ENCODE measurements at regions of chr20 and their contacts with region 1.

Region 1: DNA sequence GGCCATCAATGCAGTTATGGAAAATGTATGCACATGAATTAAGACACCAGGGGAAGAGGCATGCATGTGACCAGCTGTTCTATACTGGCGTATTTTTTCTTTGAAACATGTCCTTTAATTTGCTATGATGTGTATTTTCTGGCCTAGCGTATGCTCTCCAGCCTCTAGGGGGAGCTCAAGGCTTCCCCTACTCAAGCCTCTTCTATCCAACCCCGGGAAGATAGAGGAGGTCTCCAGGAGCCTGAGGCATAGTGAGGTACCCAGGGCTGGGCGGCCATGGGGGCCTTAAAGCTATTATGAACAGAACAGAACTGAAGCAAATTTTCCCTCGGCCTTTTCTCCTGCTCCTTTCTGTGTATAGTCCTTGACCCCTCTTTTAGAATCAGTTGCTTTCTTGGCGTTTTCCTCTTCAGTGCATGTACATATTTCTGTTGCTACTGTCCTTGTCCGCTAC is 528.9 kb downstream of the MAFB start:
- DNase-seq: no peak
- H3K4me3 Mint-ChIP-seq: no peak overlapping the region
- H3K27ac Mint-ChIP-seq: no peak overlapping the region
- H3K4me1 Mint-ChIP-seq: no peaks in the 10 kb centered on the region
- H3K27me3 Mint-ChIP-seq: no peaks in the 10 kb centered on the region

Region 2: DNA sequence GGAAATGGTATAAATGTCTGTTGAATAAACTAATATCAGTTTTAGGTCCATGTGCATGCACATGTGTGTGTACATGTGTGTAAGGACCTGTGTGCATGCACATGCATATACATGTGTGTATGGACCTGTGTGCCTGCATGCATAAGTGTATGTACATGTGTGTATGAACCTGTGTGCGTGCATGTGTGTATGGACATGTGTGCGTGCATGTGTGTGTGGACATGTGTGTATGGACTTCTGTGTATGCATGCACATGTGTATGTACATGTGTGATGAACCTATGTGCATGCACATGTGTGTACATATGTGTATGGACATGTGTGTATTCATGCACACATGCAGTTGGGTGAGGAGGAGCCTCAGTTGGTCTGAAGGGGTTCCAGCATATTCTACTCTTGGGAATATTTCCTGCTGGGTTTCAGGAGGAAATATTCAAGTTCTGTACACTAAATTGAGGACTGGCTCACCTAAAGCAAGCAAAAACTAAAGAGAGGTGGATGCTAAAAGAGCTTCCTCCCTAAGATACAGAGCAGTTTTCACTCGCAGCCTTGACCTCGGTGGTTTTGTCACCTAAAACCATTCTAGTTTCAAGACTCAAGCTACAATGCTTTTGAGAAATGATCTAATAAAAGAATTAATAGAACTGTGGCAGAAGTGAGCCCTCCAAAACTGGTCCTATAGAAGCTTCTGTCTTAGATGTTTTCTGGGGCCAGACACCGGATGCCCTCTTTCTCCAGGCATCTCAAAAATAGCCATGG is 213.9 kb before region 1 on chr20:
- intact Hi-C with region 1: no loop called
- DNase-seq: no peak
- H3K4me3 Mint-ChIP-seq: no peak overlapping the region
- H3K27ac Mint-ChIP-seq: no peak overlapping the region
- H3K4me1 Mint-ChIP-seq: no peaks in the 10 kb centered on the region
- H3K27me3 Mint-ChIP-seq: no peaks in the 10 kb centered on the region

Region 3: DNA sequence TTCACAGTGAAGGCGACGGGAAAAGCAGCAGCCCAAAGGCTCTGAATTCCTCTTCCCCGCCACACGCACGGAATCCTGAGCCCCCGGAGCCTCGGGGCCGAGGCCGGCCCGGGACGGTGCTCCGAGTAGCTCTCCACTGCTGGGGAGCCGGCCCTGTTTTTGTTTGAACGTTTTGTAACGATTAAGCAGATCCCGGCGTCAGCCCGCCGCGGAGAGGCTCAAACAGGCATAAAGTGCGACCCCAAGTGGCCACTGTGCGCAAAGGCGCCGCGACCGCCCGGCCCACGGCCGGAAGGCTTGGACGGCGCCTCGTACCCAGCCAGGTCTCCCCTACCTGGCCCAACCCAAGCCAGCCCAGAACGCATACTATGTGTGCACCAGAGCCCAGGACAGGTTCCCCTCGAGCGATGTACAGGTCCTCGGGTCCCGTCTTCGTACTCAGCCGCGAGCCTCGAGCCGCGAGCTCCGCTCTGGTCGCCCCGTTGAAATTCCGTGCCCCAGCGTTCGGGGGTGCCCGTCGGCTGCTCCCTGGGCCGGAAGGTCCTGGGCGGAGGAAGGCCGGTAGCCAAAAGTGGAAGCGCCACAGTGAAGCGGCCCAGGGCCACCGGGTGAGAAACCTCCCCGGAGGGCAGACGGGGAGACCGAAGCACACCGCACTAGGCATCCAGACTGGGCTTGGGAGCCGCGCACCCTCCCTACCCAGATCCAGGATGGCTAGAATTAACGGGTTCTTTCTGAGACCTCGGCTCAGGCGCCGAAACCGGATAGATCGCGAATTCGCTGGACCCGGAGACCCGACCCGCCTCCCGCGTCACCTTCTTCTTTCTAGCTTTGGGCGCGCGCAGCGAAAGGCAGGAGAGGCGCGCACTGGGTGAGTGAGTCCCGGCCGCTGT is 530.1 kb after region 1 on chr20:
- intact Hi-C with region 1: loop called (anchors 10 kb)
- DNase-seq: peak; percentile 72
- H3K4me3 Mint-ChIP-seq: peak overlapping the region; percentile 74
- H3K27ac Mint-ChIP-seq: no peak overlapping the region
- H3K4me1 Mint-ChIP-seq: peaks cover 6% of the 10 kb centered on the region
- H3K27me3 Mint-ChIP-seq: peaks cover 91% of the 10 kb centered on the region